ENCODE measurements at regions of chr10 and their contacts with region 1.

Region 1: GRCh38 chr10:60208676-60209269 is 180.9 kb downstream of the ANK3 start:
- DNase-seq: peak; percentile 59
- H3K4me3 Mint-ChIP-seq: no peak overlapping the region
- H3K27ac Mint-ChIP-seq: no peak overlapping the region
- H3K4me1 Mint-ChIP-seq: peaks cover 6% of the 10 kb centered on the region
- H3K27me3 Mint-ChIP-seq: no peaks in the 10 kb centered on the region
- CTCF ChIP-seq: peak; percentile 75

Region 2: GRCh38 chr10:59906417-59907202 is 302.2 kb before region 1 on chr10 and contains the start of gene CCDC6:
- CTCF ChIA-PET with region 1: interaction called, 10 read pairs
- POLR2A ChIA-PET with region 1: no interaction called
- intact Hi-C with region 1: loop called (anchors 1 kb)
- DNase-seq: peak; percentile 92
- H3K4me3 Mint-ChIP-seq: peak within 1 kb of the TSS; percentile 87
- H3K27ac Mint-ChIP-seq: peak within 1 kb of the TSS; percentile 86
- H3K4me1 Mint-ChIP-seq: peaks cover 47% of the 10 kb centered on the region
- H3K27me3 Mint-ChIP-seq: no peaks in the 10 kb centered on the region
- CTCF ChIP-seq: peak; percentile 50
- total RNA-seq, gene CCDC6: 56.6 and 66.4 TPM in 2 replicates

Region 3: GRCh38 chr10:60099998-60100747 is 108.6 kb before region 1 on chr10:
- CTCF ChIA-PET with region 1: interaction called, 147 read pairs
- POLR2A ChIA-PET with region 1: interaction called, 4 read pairs
- intact Hi-C with region 1: loop called (anchors 1 kb)
- DNase-seq: peak; percentile 63
- H3K4me3 Mint-ChIP-seq: no peak overlapping the region
- H3K27ac Mint-ChIP-seq: no peak overlapping the region
- H3K4me1 Mint-ChIP-seq: no peaks in the 10 kb centered on the region
- H3K27me3 Mint-ChIP-seq: no peaks in the 10 kb centered on the region
- CTCF ChIP-seq: peak; percentile 57

Region 4: DNA sequence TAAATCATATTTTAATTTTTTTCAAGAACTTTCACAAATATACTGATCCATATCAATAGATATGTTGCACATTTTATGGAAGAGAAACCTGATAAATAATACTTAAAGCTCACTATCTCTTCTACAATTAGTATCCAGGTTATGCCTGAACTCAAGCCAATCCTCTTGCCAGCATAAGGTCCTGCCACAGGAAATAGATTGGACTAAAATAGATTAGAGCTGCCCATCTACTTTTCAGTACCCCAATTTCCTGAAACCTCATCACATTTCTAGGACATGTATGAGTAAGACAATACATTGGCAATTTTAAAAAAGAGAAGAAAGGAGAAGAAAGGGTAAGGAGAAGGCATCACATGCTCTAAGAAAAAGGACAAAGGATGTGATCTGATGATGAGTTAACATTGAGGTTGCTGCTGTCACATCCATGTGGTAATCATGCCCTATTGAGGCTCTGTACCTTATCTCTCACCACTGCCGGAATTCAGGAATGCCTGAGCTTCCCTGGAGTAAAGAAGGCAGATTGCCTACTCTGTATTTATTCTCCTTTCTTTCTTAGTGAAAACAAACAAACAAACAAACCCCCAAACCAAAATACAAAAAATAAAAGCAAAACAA is 18.8 kb before region 1 on chr10:
- CTCF ChIA-PET with region 1: interaction called, 12 read pairs
- POLR2A ChIA-PET with region 1: no interaction called
- intact Hi-C with region 1: no loop called
- DNase-seq: no peak
- H3K4me3 Mint-ChIP-seq: no peak overlapping the region
- H3K27ac Mint-ChIP-seq: no peak overlapping the region
- H3K4me1 Mint-ChIP-seq: no peaks in the 10 kb centered on the region
- H3K27me3 Mint-ChIP-seq: no peaks in the 10 kb centered on the region
- CTCF ChIP-seq: no peak

Region 5: DNA sequence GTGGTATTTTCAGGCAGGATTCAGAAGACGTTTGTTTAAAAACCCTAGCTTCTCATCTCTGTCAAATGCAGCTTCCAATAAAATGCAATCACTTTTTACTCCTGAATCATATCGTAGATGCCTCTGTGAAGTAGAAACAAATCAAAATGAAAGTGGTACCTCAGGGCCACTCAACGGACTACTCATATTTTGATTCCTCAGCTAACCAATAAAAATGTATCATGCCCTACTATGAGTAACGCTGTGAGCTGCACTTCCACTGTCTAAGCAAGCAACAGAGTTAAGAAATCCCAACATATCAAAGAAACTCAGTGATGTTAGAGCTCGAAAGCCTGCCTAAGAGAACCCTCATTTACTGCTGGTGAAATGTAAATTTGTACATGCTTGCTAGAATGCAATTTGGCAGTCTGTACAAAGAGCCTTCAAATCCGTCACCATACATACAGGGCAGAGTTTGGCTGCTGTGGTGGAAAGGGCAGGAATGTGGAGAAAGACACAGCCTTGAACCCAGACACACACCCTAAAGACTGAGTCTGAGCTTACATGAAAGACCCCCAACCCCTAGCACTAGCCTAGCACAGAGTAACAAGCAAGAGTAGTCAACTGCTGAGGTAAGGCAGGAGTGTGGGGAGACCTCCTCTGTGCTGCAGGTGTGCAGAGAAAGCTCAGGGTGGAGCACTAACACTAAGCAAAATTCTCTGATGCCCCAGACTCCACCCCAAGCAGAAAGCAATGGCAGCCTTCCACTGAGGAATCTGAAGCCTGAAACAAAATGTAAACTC is 29.4 kb after region 1 on chr10:
- CTCF ChIA-PET with region 1: interaction called, 12 read pairs
- POLR2A ChIA-PET with region 1: no interaction called
- intact Hi-C with region 1: no loop called
- DNase-seq: peak; percentile 52
- H3K4me3 Mint-ChIP-seq: no peak overlapping the region
- H3K27ac Mint-ChIP-seq: no peak overlapping the region
- H3K4me1 Mint-ChIP-seq: no peaks in the 10 kb centered on the region
- H3K27me3 Mint-ChIP-seq: no peaks in the 10 kb centered on the region
- CTCF ChIP-seq: no peak

Region 6: DNA sequence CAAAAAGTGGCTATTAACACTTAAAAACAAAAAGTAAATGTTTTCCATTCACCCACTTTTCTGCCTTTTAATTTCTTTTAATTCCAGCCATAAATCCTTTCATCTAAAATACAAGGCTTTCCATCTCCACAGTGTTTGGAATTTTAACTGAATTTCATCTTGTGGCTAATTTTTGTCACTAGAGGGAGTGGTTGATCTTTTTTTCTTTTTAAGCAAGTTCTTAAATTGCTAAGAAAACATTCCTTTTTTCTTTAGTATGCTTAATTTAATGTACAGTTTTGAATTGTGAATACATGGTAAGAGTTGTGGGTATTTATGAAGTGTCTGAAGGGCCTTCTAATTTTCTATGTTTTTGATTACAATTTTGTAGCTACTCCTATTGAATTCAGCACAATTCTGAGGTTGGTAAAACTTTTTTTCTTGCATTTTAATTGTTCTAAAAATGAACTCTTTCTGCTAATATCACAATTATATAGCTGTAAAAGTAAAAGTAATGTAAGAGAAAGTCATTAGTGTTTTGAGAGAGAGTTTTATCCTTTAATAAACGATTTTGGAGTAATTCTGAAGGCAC is 235.8 kb after region 1 on chr10:
- CTCF ChIA-PET with region 1: interaction called, 16 read pairs
- POLR2A ChIA-PET with region 1: no interaction called
- intact Hi-C with region 1: no loop called
- DNase-seq: peak; percentile 40
- H3K4me3 Mint-ChIP-seq: no peak overlapping the region
- H3K27ac Mint-ChIP-seq: no peak overlapping the region
- H3K4me1 Mint-ChIP-seq: peaks cover 22% of the 10 kb centered on the region
- H3K27me3 Mint-ChIP-seq: no peaks in the 10 kb centered on the region
- CTCF ChIP-seq: peak; percentile 63

Measured in MCF 10A (cell line).